ENCODE measurements at regions of chrX and their contacts with region 1.

Region 1: GRCh38 chrX:40169193-40170101 is 71.7 kb upstream of the BCOR start:
- DNase-seq: peak; percentile 64 to 91 (median 78)
- ATAC-seq: peak; percentile 65
- H3K4me3 ChIP-seq: peak overlapping the region; percentile 73
- H3K4me3 Mint-ChIP-seq: peak overlapping the region; percentile 90
- H3K27ac ChIP-seq: peak overlapping the region; percentile 75 to 96
- H3K27ac Mint-ChIP-seq: peak overlapping the region; percentile 100
- H3K4me1 ChIP-seq: peaks cover 77% of the 10 kb centered on the region
- H3K4me1 Mint-ChIP-seq: peaks cover 57% of the 10 kb centered on the region
- H3K27me3 ChIP-seq: no peaks in the 10 kb centered on the region
- H3K27me3 Mint-ChIP-seq: no peaks in the 10 kb centered on the region
- CTCF ChIP-seq: peak; percentile 28

Region 2: GRCh38 chrX:39814391-39814790 is 355.1 kb before region 1 on chrX:
- CTCF ChIA-PET with region 1: no interaction called
- POLR2A ChIA-PET with region 1: interaction called, 4 read pairs
- intact Hi-C with region 1: loop called (anchors 5 kb)
- DNase-seq: peak in 13 of 14 experiments; percentile 9 to 75 (median 33)
- ATAC-seq: peak; percentile 63
- H3K4me3 ChIP-seq: no peak overlapping the region
- H3K4me3 Mint-ChIP-seq: no peak overlapping the region
- H3K27ac ChIP-seq: no peak overlapping the region
- H3K27ac Mint-ChIP-seq: no peak overlapping the region
- H3K4me1 ChIP-seq: peaks cover 14% of the 10 kb centered on the region
- H3K4me1 Mint-ChIP-seq: peaks cover 18% of the 10 kb centered on the region
- H3K27me3 ChIP-seq: no peaks in the 10 kb centered on the region
- H3K27me3 Mint-ChIP-seq: no peaks in the 10 kb centered on the region
- CTCF ChIP-seq: peak; percentile 40

Region 3: GRCh38 chrX:39859991-39860861 is 309.2 kb before region 1 on chrX:
- CTCF ChIA-PET with region 1: no interaction called
- POLR2A ChIA-PET with region 1: interaction called, 11 read pairs
- intact Hi-C with region 1: no loop called
- DNase-seq: peak in 13 of 14 experiments; percentile 34 to 82 (median 63)
- ATAC-seq: peak; percentile 41
- H3K4me3 ChIP-seq: no peak overlapping the region
- H3K4me3 Mint-ChIP-seq: peak overlapping the region; percentile 30
- H3K27ac ChIP-seq: no peak overlapping the region
- H3K27ac Mint-ChIP-seq: peak overlapping the region; percentile 87
- H3K4me1 ChIP-seq: peaks cover 40% of the 10 kb centered on the region
- H3K4me1 Mint-ChIP-seq: peaks cover 28% of the 10 kb centered on the region
- H3K27me3 ChIP-seq: no peaks in the 10 kb centered on the region
- H3K27me3 Mint-ChIP-seq: no peaks in the 10 kb centered on the region
- CTCF ChIP-seq: no peak

Region 4: DNA sequence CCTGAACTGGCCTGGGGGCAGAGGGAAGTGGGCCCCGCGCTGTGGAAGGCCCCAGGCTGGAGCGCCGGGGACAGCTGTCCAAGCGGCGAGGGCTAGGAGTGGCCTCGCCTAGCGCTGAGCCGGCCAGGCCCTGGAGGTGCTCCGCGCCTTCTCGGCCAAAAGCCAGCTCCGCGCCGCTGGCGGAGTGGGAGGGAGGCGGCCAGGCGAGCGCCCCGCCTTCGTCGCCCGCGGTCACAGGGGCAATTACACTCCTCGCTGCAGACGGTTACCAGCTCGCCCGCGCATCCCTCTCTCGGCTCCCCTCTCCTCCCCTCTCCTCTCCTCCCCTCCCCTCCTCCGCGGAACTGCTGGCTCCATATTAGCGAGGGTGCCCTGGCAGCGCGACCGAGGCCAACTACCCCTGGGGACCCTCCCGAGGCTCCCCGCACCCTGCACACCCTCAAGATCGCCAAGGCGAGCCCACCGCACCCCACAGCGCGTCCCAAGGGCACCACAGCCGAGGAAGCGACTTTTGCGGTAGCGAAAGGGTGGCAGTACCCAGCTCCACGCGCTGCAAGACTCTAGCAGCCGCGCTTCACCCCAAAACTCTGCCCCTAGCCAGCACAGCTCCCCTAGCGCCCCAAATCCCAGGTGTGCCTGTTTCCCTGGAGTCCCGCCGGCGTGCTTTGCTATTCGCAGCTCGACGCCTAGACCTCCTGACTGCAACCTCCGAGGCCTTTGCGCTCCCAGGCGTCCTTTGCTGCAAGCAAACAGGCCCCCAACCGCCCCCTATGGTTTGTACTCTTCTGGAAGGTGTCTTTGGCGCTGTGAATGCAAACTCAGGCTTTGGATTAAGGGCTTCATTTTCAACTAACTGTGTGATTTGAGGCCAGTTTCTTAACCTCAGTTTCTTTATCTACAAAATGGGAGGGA is 163.1 kb before region 1 on chrX:
- CTCF ChIA-PET with region 1: no interaction called
- POLR2A ChIA-PET with region 1: interaction called, 4 read pairs
- intact Hi-C with region 1: loop called (anchors 5 to 10 kb)
- DNase-seq: peak in 5 of 14 experiments; percentile 0 to 51 (median 38)
- ATAC-seq: peak; percentile 29
- H3K4me3 ChIP-seq: peak overlapping the region; percentile 19
- H3K4me3 Mint-ChIP-seq: peak overlapping the region; percentile 78
- H3K27ac ChIP-seq: no peak overlapping the region
- H3K27ac Mint-ChIP-seq: no peak overlapping the region
- H3K4me1 ChIP-seq: peaks cover 48% of the 10 kb centered on the region
- H3K4me1 Mint-ChIP-seq: peaks cover 30% of the 10 kb centered on the region
- H3K27me3 ChIP-seq: peaks cover 20 to 33% of the 10 kb centered on the region in 2 experiments
- H3K27me3 Mint-ChIP-seq: peaks cover 55% of the 10 kb centered on the region
- CTCF ChIP-seq: no peak

Region 5: GRCh38 chrX:40013266-40014195 is 155.9 kb before region 1 on chrX:
- CTCF ChIA-PET with region 1: no interaction called
- POLR2A ChIA-PET with region 1: interaction called, 8 read pairs
- intact Hi-C with region 1: loop called (anchors 5 to 10 kb)
- DNase-seq: peak in 7 of 14 experiments; percentile 3 to 67 (median 40)
- ATAC-seq: peak; percentile 30
- H3K4me3 ChIP-seq: peak overlapping the region; percentile 61
- H3K4me3 Mint-ChIP-seq: peak overlapping the region; percentile 81
- H3K27ac ChIP-seq: no peak overlapping the region
- H3K27ac Mint-ChIP-seq: no peak overlapping the region
- H3K4me1 ChIP-seq: peaks cover 52% of the 10 kb centered on the region
- H3K4me1 Mint-ChIP-seq: peaks cover 32% of the 10 kb centered on the region
- H3K27me3 ChIP-seq: peaks cover 0 to 29% of the 10 kb centered on the region in 2 experiments
- H3K27me3 Mint-ChIP-seq: peaks cover 24% of the 10 kb centered on the region
- CTCF ChIP-seq: no peak

Region 6: GRCh38 chrX:40153335-40154249 is 15.9 kb before region 1 on chrX:
- CTCF ChIA-PET with region 1: interaction called, 5 read pairs
- POLR2A ChIA-PET with region 1: interaction called, 32 read pairs
- intact Hi-C with region 1: no loop called
- DNase-seq: peak in 9 of 14 experiments; percentile 37 to 85 (median 57)
- ATAC-seq: peak; percentile 62
- H3K4me3 ChIP-seq: peak overlapping the region; percentile 55
- H3K4me3 Mint-ChIP-seq: peak overlapping the region; percentile 92
- H3K27ac ChIP-seq: no peak overlapping the region
- H3K27ac Mint-ChIP-seq: peak overlapping the region; percentile 55
- H3K4me1 ChIP-seq: peaks cover 44% of the 10 kb centered on the region
- H3K4me1 Mint-ChIP-seq: peaks cover 11% of the 10 kb centered on the region
- H3K27me3 ChIP-seq: no peaks in the 10 kb centered on the region
- H3K27me3 Mint-ChIP-seq: no peaks in the 10 kb centered on the region
- CTCF ChIP-seq: no peak

Region 7: DNA sequence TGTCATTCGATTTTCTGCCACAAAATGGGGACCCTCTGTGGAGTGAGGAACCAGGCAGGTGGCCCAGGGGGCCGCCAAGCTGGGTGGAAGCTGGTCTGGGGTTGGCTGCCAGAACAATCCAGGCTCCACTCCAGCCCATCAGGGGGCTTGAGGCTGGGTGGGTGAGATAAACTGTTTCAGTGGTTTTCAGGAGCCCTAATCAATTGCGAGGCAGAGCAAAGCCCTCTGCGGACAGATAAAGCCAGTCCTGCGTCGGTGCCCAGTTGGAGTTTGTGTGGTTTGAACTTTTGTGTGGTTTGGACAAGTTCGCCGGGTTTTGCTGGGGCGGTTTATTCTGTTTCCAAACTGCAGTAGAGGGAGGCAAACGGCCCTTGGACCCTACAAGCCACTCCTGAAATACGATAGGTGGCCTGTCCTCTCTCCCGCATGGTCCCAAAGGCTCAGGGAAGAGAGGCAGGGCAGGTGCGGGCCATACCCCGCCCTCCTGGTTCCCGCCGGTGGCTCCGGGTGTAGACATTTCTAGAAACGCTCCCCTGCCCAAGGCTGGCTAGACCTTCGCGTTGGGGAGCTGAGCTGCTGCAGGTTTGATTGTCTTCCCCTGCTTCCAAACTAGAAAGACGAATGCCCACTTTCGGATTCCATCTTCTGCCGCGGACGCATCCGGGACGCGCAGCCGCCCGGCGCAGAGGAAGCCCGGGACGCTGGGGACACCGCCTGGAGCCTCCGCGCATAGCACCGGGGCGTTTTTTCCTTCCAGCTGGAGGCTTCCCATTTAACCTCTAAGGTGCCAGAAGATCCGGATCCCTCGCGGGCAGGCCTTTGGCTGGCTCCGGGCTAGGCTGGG is 97.3 kb after region 1 on chrX:
- CTCF ChIA-PET with region 1: no interaction called
- POLR2A ChIA-PET with region 1: interaction called, 8 read pairs
- intact Hi-C with region 1: loop called (anchors 5 to 10 kb)
- DNase-seq: peak; percentile 15 to 74 (median 42)
- ATAC-seq: peak; percentile 83
- H3K4me3 ChIP-seq: peak overlapping the region; percentile 67
- H3K4me3 Mint-ChIP-seq: peak overlapping the region; percentile 85
- H3K27ac ChIP-seq: no peak overlapping the region
- H3K27ac Mint-ChIP-seq: no peak overlapping the region
- H3K4me1 ChIP-seq: peaks cover 14% of the 10 kb centered on the region
- H3K4me1 Mint-ChIP-seq: peaks cover 6% of the 10 kb centered on the region
- H3K27me3 ChIP-seq: no peaks in the 10 kb centered on the region
- H3K27me3 Mint-ChIP-seq: no peaks in the 10 kb centered on the region
- CTCF ChIP-seq: peak; percentile 67

Measured in CD4-positive, alpha-beta T cell (primary cell).